Dorsolateral prefrontal cortex (tissue), 120 donors: ENCODE measurements at regions of chr2 and their contacts with region 1.

Region 1: DNA sequence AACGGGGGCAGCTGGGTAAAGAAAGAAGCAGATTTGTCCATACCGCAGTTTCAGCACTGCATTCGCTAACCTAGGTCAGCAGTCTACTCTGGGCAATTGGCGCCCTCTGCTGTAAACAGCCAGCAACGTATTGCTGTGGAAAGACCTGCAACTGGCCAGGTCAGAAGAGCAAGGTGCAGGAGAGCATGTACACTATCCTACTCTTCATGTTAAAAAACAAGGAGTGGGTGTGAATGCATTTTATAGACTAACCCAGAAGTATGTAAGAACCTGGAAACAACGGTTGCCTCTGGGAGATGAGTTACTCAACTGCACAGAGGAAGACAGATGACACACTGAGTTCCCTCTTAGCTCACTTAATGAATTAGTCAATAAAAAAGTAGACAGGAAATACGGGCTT is 6.2 kb downstream of the MRPS5 start:
- DNase-seq: peak; percentile 61 to 87 (median 70)
- H3K4me3 ChIP-seq: no peak overlapping the region
- H3K27ac ChIP-seq: peak overlapping the region in 8 of 59 donors; percentile 1 to 46 (median 20)
- H3K27me3 ChIP-seq: no peaks in the 10 kb centered on the region
- CTCF ChIP-seq: peak; percentile 25 to 92 (median 80)

Region 2: GRCh38 chr2:94874277-94875008 is 241.0 kb before region 1 on chr2:
- intact Hi-C with region 1: loop called in 1 of 2 experiments (anchors 5 kb)
- DNase-seq: peak in 5 of 10 donors; percentile 21 to 48 (median 33)
- H3K4me3 ChIP-seq: no peak overlapping the region
- H3K27ac ChIP-seq: no peak overlapping the region
- H3K27me3 ChIP-seq: peaks cover 0 to 75% (median 30%) of the 10 kb centered on the region in 45 donors
- CTCF ChIP-seq: peak in 54 of 56 donors; percentile 15 to 79 (median 64)

Region 3: GRCh38 chr2:94986392-94986963 is 128.9 kb before region 1 on chr2:
- intact Hi-C with region 1: loop called (anchors 2 to 10 kb)
- DNase-seq: peak in 9 of 10 donors; percentile 18 to 85 (median 66)
- H3K4me3 ChIP-seq: no peak overlapping the region
- H3K27ac ChIP-seq: no peak overlapping the region
- H3K27me3 ChIP-seq: peaks cover 0 to 13% (median 0%) of the 10 kb centered on the region in 45 donors
- CTCF ChIP-seq: peak; percentile 53 to 93 (median 78)

Region 4: GRCh38 chr2:94997981-94998930 is 117.2 kb before region 1 on chr2:
- intact Hi-C with region 1: loop called in 1 of 2 experiments (anchors 10 kb)
- DNase-seq: peak in 4 of 10 donors; percentile 21 to 58 (median 26)
- H3K4me3 ChIP-seq: peak overlapping the region in 56 of 59 donors; percentile 16 to 69 (median 50)
- H3K27ac ChIP-seq: peak overlapping the region in 4 of 59 donors; percentile 18 to 62 (median 50)
- H3K27me3 ChIP-seq: peaks cover 0 to 36% (median 16%) of the 10 kb centered on the region in 45 donors
- CTCF ChIP-seq: peak in 53 of 56 donors; percentile 12 to 81 (median 52)

Region 5: GRCh38 chr2:95022309-95023221 is 92.9 kb before region 1 on chr2:
- intact Hi-C with region 1: loop called (anchors 5 to 10 kb)
- DNase-seq: peak; percentile 36 to 91 (median 88)
- H3K4me3 ChIP-seq: peak overlapping the region in 4 of 59 donors; percentile 0 to 83 (median 30)
- H3K27ac ChIP-seq: peak overlapping the region; percentile 65 to 100 (median 96)
- H3K27me3 ChIP-seq: peaks cover 0 to 36% (median 6%) of the 10 kb centered on the region in 45 donors
- CTCF ChIP-seq: peak; percentile 77 to 99 (median 96)

Region 6: DNA sequence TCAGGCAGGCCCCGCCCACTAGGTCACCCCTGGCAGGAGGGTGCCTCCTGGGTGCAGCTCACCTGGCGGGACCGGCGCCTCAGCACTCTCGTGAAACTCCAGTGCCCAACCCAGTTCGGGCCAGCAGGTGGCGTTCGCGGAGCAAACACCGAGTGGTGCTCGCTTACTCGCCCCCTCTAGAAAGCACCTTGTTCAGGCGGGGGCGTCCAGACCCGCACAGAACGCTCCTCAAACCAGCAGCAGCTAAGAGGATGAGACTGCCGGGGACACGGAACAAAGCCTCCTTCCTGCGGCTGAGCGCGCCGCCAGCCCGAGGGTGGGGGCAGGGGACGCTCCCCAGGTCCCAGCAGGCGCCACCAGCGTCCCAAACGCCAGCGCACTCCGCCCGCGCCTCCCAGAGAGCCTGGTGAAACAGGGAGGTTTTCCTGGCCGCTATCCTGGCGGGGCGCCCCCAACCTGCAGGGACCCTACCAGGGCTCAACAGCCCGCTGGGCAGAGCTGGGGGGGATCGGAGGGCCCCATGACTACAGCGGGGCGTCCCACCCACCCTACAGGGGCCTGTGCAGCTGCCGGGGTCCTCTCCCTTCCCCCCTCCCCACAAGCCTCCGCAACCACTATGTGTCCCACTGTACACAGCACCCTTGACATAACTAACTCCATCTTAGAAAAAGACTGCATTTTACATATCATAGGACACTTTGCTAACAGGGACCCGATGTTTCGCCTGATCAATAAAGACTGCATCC is 38.5 kb before region 1 on chr2:
- intact Hi-C with region 1: loop called (anchors 2 to 5 kb)
- DNase-seq: peak; percentile 71 to 90 (median 88)
- H3K4me3 ChIP-seq: peak overlapping the region; percentile 33 to 80 (median 61)
- H3K27ac ChIP-seq: peak overlapping the region in 55 of 59 donors; percentile 0 to 98 (median 88)
- H3K27me3 ChIP-seq: peaks cover 0 to 18% (median 0%) of the 10 kb centered on the region in 45 donors
- CTCF ChIP-seq: peak; percentile 76 to 97 (median 89)